ENCODE measurements at regions of chr7 and their contacts with region 1.

Region 1: GRCh38 chr7:157336383-157337315 is at the start of gene DNAJB6:
- DNase-seq: peak; percentile 94
- H3K4me3 Mint-ChIP-seq: peak within 1 kb of the TSS; percentile 96
- H3K27ac Mint-ChIP-seq: peak within 1 kb of the TSS; percentile 100
- H3K4me1 Mint-ChIP-seq: peaks cover 31% of the 10 kb centered on the region
- H3K27me3 Mint-ChIP-seq: peaks cover 27% of the 10 kb centered on the region
- total RNA-seq, gene DNAJB6: 127 and 137 TPM in 2 replicates

Region 2: GRCh38 chr7:156949541-156950380 is 386.9 kb before region 1 on chr7 and contains the start of gene NOM1:
- intact Hi-C with region 1: loop called (anchors 5 kb)
- DNase-seq: peak; percentile 86
- H3K4me3 Mint-ChIP-seq: peak within 1 kb of the TSS; percentile 97
- H3K27ac Mint-ChIP-seq: peak within 1 kb of the TSS; percentile 97
- H3K4me1 Mint-ChIP-seq: peaks cover 15% of the 10 kb centered on the region
- H3K27me3 Mint-ChIP-seq: peaks cover 2% of the 10 kb centered on the region
- total RNA-seq, gene NOM1: 46.4 and 50.9 TPM in 2 replicates

Region 3: DNA sequence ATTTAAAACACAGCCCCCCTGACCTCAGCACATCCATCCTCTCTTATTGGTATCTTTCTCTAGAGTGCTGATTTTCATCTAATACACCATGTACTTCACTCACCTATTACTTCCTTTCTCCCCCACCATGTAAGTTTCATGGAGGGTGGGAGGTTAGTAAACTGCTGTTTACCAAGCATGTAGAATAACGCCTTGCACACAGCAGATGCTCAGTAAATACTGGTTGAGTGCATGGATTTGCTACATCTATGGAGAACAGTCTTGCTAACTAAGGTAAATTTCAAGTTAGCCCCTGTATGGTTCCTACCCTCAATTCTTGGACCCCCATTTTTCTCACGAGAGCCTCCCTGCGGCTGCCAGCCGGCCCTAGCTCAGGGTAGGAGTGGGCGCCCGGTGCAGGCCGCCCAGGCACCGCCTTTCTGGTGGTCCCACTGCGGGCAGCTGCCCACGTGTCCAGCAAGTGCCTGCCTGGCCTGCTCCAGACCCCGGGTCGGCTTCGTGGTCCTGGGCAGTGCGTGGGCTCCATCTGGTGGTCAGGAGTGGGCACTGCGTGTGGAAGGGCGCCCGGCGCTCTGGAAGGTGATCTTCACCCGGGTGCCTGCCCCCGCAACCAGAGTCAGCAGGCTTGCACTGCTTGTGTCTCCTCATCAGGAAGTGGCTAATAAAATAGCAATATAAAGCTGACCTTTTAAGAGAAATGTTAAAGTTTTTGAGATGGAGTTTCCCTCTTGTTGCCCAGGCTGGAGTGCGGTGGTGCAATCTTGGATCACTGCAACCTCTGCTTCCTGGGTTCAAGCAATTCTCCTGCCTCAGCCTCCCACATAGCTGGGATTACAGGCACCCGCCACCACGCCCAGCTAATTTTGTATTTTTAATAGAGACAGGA is 63.2 kb before region 1 on chr7:
- intact Hi-C with region 1: loop called (anchors 2 kb)
- DNase-seq: peak; percentile 36
- H3K4me3 Mint-ChIP-seq: no peak overlapping the region
- H3K27ac Mint-ChIP-seq: no peak overlapping the region
- H3K4me1 Mint-ChIP-seq: peaks cover 18% of the 10 kb centered on the region
- H3K27me3 Mint-ChIP-seq: peaks cover 2% of the 10 kb centered on the region

Region 4: GRCh38 chr7:157318012-157318709 is 18.5 kb before region 1 on chr7:
- intact Hi-C with region 1: loop called (anchors 2 kb)
- DNase-seq: no peak
- H3K4me3 Mint-ChIP-seq: no peak overlapping the region
- H3K27ac Mint-ChIP-seq: peak overlapping the region; percentile 67
- H3K4me1 Mint-ChIP-seq: peaks cover 10% of the 10 kb centered on the region
- H3K27me3 Mint-ChIP-seq: no peaks in the 10 kb centered on the region

Region 5: DNA sequence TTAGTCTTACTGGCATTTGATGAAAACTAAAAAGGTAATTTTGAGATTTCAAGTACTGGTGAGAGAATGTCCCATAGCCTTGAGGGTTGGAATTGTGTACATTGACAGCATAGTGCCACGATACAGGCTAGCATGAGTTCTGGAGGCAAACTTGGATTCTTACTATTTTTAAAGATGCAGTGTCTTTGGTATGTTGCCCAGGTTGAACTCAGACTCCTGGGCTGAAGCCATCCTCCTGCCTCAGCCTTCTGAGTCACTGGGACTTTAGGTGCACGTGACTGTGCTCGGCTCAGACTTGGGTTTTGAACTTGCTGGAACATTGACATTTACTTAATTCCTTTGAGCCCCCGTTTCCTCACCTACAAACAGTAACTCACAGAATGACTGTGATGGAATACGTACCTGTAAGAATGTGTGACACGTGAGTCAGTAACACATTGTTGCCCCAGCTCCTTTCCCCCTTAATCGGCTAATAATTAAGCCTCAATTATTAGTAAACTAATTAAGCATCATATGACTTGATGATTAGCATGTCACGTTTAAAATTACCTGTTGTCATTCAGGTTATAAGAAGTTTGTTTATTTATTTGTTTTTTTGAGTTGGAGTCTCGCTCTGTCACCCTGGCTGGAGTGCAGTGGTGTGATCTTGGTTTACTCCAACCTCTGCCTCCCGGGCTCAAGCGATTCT is 10.7 kb after region 1 on chr7:
- intact Hi-C with region 1: no loop called
- DNase-seq: no peak
- H3K4me3 Mint-ChIP-seq: no peak overlapping the region
- H3K27ac Mint-ChIP-seq: no peak overlapping the region
- H3K4me1 Mint-ChIP-seq: peaks cover 51% of the 10 kb centered on the region
- H3K27me3 Mint-ChIP-seq: no peaks in the 10 kb centered on the region